Activated CD4-positive, alpha-beta T cell treated with anti-CD3 and anti-CD28 coated beads, Interleukin-2, amount 10 ng/mL, durations not matched to agents 24 days and 14 days (primary cell): ENCODE measurements at regions of chr4 and their contacts with region 1.

Region 1: GRCh38 chr4:39458505-39459300 is at the starts of genes LIAS and RPL9:
- DNase-seq: peak; percentile 98
- H3K4me3 Mint-ChIP-seq: peak within 1 kb of the TSS; percentile 89
- H3K27ac Mint-ChIP-seq: peak within 1 kb of the TSS; percentile 98
- H3K4me1 Mint-ChIP-seq: peaks cover 35% of the 10 kb centered on the region
- H3K27me3 Mint-ChIP-seq: peaks cover 2% of the 10 kb centered on the region
- total RNA-seq, gene LIAS: 27.7 and 29.2 TPM in 2 replicates
- total RNA-seq, gene RPL9: 1,785 and 1,789 TPM in 2 replicates

Region 2: GRCh38 chr4:39181905-39182638 is 276.6 kb before region 1 on chr4 and contains the start of gene WDR19:
- intact Hi-C with region 1: loop called (anchors 2 kb)
- DNase-seq: peak; percentile 100
- H3K4me3 Mint-ChIP-seq: no peak within 1 kb of the TSS
- H3K27ac Mint-ChIP-seq: no peak within 1 kb of the TSS
- H3K4me1 Mint-ChIP-seq: peaks cover 7% of the 10 kb centered on the region
- H3K27me3 Mint-ChIP-seq: peaks cover 6% of the 10 kb centered on the region
- total RNA-seq, gene WDR19: 12.1 and 15.6 TPM in 2 replicates

Region 3: DNA sequence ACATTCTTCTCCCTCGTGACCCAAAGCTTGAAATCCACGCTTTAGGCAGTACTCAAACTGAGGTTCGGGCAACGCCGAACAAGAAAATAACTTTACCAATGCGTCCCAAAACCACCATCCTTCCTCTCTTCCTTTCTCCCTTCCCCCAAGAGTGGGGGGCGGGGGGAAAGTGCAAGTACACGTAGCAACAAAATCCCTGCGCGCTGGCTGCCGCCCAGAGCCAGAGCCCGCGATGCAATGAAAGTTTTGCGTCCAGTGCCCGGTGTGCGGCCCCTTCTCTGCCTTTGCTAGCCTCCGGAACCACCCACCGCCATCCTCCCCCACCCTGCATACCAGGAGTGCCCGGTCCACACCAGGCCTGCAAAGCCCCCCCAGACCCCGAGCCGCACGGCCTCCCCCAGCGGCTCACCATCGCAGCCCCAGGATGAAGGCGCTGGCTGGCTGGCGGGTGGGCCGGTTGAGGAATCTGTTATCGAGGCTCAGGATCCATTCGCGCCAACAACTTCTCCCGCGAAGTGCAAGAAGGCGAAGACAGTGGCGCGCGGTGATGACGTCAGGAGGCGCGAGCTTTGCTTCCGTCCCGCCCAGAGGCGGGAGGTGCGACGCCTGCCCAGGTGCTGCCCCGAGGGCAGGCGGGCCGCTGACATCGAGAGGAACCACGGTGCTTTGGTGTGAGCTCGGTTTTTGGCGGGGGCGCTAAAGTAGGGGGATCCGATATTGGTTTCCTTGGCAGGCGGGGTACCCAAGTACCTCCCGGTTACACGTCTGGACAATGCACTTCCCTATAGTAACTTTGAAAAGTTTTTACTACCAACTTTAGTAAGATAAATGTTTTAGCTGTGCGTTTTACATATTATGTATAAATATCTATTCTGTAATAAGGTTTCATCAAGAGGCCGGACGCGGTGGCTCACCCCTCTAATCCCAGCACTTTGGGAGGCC is 92.6 kb before region 1 on chr4 and contains the start of gene RFC1:
- intact Hi-C with region 1: loop called (anchors 2 kb)
- DNase-seq: peak; percentile 98
- H3K4me3 Mint-ChIP-seq: peak within 1 kb of the TSS; percentile 96
- H3K27ac Mint-ChIP-seq: peak within 1 kb of the TSS; percentile 94
- H3K4me1 Mint-ChIP-seq: peaks cover 25% of the 10 kb centered on the region
- H3K27me3 Mint-ChIP-seq: no peaks in the 10 kb centered on the region
- total RNA-seq, gene RFC1: 81.6 and 83.0 TPM in 2 replicates

Region 4: DNA sequence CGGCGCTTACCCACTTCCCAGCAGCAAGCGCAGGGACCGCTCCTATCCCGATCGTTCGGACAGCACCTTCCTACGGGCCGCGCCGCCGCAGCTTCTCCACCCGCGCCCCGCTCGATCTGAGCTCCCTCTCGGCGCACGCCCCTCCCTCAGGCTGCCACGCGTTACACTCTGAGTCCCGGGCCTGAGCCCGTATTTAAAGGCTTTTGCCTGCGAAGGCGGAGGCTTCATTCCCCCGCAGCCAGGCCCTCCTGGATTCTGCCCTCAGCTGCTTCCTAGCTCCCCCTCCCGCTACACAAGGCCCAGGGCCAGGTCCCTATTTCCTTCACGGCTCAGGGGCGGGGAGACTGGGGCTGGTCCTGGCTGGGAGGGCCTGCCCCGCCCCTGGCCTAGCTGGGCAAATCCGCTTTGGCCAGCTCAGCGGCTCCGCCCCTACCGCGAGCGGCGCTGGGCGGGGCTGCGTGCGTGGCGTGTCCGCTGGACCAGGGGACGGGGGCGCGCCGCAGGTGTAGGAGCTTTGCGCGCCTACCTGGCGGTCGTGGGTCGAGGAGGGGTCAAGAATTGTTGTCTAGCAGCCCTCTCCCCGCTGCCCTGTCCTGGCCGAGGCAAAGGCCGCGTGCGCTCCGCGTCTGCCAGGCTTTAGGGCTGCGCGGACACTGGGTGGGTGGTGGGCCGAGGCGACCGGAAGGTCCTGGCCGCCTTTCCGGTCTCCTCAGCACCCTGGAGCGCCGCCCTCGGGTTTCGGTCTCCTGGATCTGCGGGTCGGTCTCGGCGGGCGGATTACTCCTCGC is 68.8 kb after region 1 on chr4 and contains the start of gene UGDH:
- intact Hi-C with region 1: loop called (anchors 1 kb)
- DNase-seq: peak; percentile 99
- H3K4me3 Mint-ChIP-seq: peak within 1 kb of the TSS; percentile 98
- H3K27ac Mint-ChIP-seq: peak within 1 kb of the TSS; percentile 95
- H3K4me1 Mint-ChIP-seq: peaks cover 20% of the 10 kb centered on the region
- H3K27me3 Mint-ChIP-seq: no peaks in the 10 kb centered on the region
- total RNA-seq, gene UGDH: 23.1 and 29.2 TPM in 2 replicates

Region 5: DNA sequence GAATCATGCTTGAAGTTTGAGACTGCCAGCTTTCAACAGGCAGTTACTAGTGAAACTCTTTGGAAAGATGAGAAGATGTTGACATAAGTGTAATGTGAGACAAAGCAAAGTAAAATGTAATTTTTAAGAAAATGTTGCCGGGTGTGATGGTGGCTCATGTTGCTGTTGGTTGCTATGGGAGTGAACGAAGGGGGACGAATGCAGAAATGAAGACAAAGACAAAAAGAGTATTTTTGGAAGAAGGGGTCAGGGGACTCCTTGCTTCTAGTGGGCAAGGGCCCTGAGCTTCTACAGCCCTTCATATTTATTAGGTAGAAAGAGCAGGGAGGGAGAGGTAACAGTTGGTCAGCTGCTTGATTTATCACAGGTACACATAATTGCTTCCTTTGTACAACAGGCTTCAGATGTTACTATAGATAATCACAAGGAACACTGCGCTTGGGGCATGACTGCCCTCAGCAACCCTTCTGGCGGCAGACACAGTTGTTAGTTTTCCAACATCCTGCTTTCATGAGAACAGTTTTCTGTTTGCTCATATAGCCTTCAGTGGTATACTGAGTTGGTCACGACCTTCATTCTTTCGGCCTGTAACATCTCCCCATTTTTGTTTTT is 80.5 kb after region 1 on chr4:
- intact Hi-C with region 1: no loop called
- DNase-seq: no peak
- H3K4me3 Mint-ChIP-seq: no peak overlapping the region
- H3K27ac Mint-ChIP-seq: no peak overlapping the region
- H3K4me1 Mint-ChIP-seq: no peaks in the 10 kb centered on the region
- H3K27me3 Mint-ChIP-seq: no peaks in the 10 kb centered on the region

Region 6: DNA sequence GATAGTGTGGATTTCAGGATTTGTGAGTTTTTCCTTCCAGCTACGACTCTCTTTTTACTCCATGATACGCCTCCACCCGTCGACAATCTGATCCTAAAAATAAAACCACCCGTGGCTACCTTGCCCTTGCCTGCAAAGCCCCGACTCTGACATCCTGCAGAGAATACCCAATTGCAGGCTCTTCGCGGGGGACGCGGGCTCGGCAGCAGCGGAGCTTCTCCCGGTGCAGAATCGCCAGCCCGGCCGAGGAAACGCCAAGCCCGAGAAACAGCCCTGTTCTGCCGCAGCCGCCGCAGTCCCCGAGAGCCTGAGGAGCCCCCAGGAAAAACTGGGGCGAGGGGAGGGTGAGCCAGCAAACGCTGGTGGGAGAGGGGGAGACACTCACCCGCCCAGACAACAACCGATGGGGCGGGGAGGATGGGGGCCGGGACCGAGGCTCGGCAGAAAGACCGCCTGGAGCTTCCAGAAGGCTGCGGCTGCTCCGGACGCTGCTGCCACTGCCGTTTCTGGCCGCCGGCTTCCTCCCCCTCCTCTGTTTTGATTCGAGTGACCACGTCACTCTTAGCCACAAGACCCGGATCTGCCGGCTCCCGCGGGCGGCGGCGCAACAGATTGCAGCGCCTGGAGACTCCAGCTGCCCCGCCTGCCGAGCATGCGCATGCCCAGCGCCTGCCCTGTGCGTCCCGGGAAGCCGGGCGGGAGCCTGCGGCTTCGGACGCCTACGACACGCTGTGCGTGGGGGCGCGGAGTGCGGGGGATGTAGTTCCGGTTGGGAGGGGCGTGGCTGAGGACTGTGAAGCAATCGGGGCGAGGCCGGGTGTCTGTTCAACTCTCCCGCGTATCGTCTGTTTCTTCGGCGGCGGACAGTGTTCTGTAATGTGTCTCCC is 179.9 kb after region 1 on chr4 and contains the start of gene SMIM14:
- intact Hi-C with region 1: loop called (anchors 2 kb)
- DNase-seq: peak; percentile 97
- H3K4me3 Mint-ChIP-seq: peak within 1 kb of the TSS; percentile 90
- H3K27ac Mint-ChIP-seq: peak within 1 kb of the TSS; percentile 69
- H3K4me1 Mint-ChIP-seq: peaks cover 31% of the 10 kb centered on the region
- H3K27me3 Mint-ChIP-seq: peaks cover 31% of the 10 kb centered on the region
- total RNA-seq, gene SMIM14: 1.0 and 2.0 TPM in 2 replicates